ENCODE measurements at regions of chr5 and their contacts with region 1.

Region 1: GRCh38 chr5:140113699-140114263 is at the start of gene PURA:
- DNase-seq: no peak
- ATAC-seq: peak; percentile 89
- H3K4me3 ChIP-seq: peak within 1 kb of the TSS; percentile 72 to 93
- H3K27ac ChIP-seq: peak within 1 kb of the TSS; percentile 96
- H3K4me1 ChIP-seq: peaks cover 62% of the 10 kb centered on the region
- H3K27me3 ChIP-seq: no peaks in the 10 kb centered on the region
- CTCF ChIP-seq: peak; percentile 68
- total RNA-seq, gene PURA: 16.9 TPM

Region 2: DNA sequence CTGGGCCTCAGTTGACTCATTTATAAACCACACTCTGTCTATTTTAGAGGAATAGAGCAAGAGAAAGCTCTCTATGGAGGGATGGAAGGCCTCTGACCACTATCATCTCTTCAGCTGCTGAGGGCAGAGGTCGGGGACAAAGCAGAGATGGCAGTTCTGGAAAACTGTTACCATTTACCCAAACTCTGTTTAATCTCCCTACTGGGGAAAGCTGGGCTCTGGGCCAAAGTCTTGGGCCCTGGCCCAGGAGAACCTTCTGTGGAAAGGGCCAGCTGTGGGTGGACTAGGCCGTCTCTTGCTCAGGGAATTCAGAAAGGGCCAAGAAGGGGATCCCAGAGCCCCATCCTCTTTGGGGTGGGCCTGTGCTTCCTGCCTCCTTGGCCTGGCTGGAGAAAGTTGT is 218.1 kb before region 1 on chr5:
- CTCF ChIA-PET with region 1: no interaction called
- POLR2A ChIA-PET with region 1: interaction called, 10 read pairs
- in situ Hi-C with region 1: no loop called
- intact Hi-C with region 1: no loop called
- DNase-seq: no peak
- ATAC-seq: no peak
- H3K4me3 ChIP-seq: no peak overlapping the region
- H3K27ac ChIP-seq: no peak overlapping the region
- H3K4me1 ChIP-seq: no peaks in the 10 kb centered on the region
- H3K27me3 ChIP-seq: no peaks in the 10 kb centered on the region
- CTCF ChIP-seq: no peak

Region 3: GRCh38 chr5:140005145-140005591 is 108.6 kb before region 1 on chr5:
- CTCF ChIA-PET with region 1: interaction called, 12 read pairs
- POLR2A ChIA-PET with region 1: no interaction called
- in situ Hi-C with region 1: no loop called
- intact Hi-C with region 1: no loop called
- DNase-seq: no peak
- ATAC-seq: no peak
- H3K4me3 ChIP-seq: no peak overlapping the region
- H3K27ac ChIP-seq: no peak overlapping the region
- H3K4me1 ChIP-seq: no peaks in the 10 kb centered on the region
- H3K27me3 ChIP-seq: no peaks in the 10 kb centered on the region
- CTCF ChIP-seq: no peak

Region 4: GRCh38 chr5:140042643-140043500 is 70.9 kb before region 1 on chr5 and contains the start of gene NRG2:
- CTCF ChIA-PET with region 1: no interaction called
- POLR2A ChIA-PET with region 1: no interaction called
- in situ Hi-C with region 1: no loop called
- intact Hi-C with region 1: loop called (anchors 5 kb)
- DNase-seq: peak; percentile 64
- ATAC-seq: peak; percentile 86
- H3K4me3 ChIP-seq: peak within 1 kb of the TSS; percentile 82 to 89
- H3K27ac ChIP-seq: peak within 1 kb of the TSS; percentile 88
- H3K4me1 ChIP-seq: peaks cover 26% of the 10 kb centered on the region
- H3K27me3 ChIP-seq: no peaks in the 10 kb centered on the region
- CTCF ChIP-seq: peak; percentile 84
- total RNA-seq, gene NRG2: 20.2 TPM

Region 5: DNA sequence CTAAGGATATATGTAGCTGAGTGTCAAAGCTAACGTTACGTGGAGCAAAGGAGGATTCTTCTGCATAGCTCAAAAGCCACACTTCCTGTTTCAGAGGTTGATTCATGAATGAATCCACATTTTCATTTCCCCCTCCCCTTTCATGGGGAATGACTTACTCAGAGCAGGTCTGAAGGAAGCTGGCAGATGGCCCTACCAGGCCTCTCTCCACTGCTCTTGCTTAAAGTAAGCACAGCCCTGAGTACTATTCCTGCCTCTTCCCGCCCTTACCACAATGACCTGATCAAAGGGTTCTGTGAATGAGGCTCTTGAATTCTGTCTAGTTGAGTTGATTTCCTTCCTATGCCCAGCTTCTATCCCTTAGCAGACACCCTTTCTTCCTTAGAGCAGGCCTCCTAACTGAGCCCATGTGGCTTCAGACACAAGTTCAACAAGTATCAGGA is 18.2 kb after region 1 on chr5:
- CTCF ChIA-PET with region 1: interaction called, 13 read pairs
- POLR2A ChIA-PET with region 1: no interaction called
- in situ Hi-C with region 1: no loop called
- intact Hi-C with region 1: no loop called
- DNase-seq: no peak
- ATAC-seq: peak; percentile 77
- H3K4me3 ChIP-seq: no peak overlapping the region
- H3K27ac ChIP-seq: no peak overlapping the region
- H3K4me1 ChIP-seq: peaks cover 13% of the 10 kb centered on the region
- H3K27me3 ChIP-seq: no peaks in the 10 kb centered on the region
- CTCF ChIP-seq: no peak

Region 6: GRCh38 chr5:140157032-140157803 is 43.4 kb after region 1 on chr5:
- CTCF ChIA-PET with region 1: interaction called, 16 read pairs
- POLR2A ChIA-PET with region 1: no interaction called
- in situ Hi-C with region 1: no loop called
- intact Hi-C with region 1: loop called (anchors 5 kb)
- DNase-seq: peak; percentile 57
- ATAC-seq: peak; percentile 98
- H3K4me3 ChIP-seq: peak overlapping the region; percentile 16 to 42
- H3K27ac ChIP-seq: peak overlapping the region; percentile 74
- H3K4me1 ChIP-seq: peaks cover 6% of the 10 kb centered on the region
- H3K27me3 ChIP-seq: no peaks in the 10 kb centered on the region
- CTCF ChIP-seq: peak; percentile 93

Region 7: GRCh38 chr5:140244525-140245025 is 130.8 kb after region 1 on chr5:
- CTCF ChIA-PET with region 1: no interaction called
- POLR2A ChIA-PET with region 1: no interaction called
- in situ Hi-C with region 1: no loop called
- intact Hi-C with region 1: no loop called
- DNase-seq: no peak
- ATAC-seq: peak; percentile 75
- H3K4me3 ChIP-seq: no peak overlapping the region
- H3K27ac ChIP-seq: no peak overlapping the region
- H3K4me1 ChIP-seq: peaks cover 36% of the 10 kb centered on the region
- H3K27me3 ChIP-seq: no peaks in the 10 kb centered on the region
- CTCF ChIP-seq: peak; percentile 96

Region 8: DNA sequence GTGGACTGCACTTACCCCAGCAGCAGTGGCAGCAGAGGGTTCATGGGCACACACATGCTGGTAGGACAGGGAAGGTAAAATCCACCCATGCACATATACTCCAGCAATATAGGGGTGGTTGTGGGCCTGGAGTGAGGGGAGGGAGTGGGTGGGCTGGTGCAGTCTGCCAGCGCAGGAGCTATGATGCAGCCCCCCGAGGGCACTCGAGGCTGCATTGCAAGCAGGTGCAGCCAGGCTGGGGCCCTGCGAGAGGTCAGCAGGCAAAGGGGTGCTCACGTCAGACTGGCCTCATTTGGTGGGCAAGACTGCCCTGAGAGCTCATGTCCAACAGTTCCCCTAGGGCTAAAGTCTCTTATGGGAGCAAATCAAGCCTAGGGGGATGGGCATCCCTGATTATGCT is 639.8 kb after region 1 on chr5:
- CTCF ChIA-PET with region 1: no interaction called
- POLR2A ChIA-PET with region 1: no interaction called
- in situ Hi-C with region 1: no loop called
- intact Hi-C with region 1: no loop called
- DNase-seq: no peak
- ATAC-seq: no peak
- H3K4me3 ChIP-seq: no peak overlapping the region
- H3K27ac ChIP-seq: no peak overlapping the region
- H3K4me1 ChIP-seq: no peaks in the 10 kb centered on the region
- H3K27me3 ChIP-seq: no peaks in the 10 kb centered on the region
- CTCF ChIP-seq: no peak

Measured in Panc1 (cell line).